ENCODE measurements at regions of chr7 and their contacts with region 1.

Region 1: DNA sequence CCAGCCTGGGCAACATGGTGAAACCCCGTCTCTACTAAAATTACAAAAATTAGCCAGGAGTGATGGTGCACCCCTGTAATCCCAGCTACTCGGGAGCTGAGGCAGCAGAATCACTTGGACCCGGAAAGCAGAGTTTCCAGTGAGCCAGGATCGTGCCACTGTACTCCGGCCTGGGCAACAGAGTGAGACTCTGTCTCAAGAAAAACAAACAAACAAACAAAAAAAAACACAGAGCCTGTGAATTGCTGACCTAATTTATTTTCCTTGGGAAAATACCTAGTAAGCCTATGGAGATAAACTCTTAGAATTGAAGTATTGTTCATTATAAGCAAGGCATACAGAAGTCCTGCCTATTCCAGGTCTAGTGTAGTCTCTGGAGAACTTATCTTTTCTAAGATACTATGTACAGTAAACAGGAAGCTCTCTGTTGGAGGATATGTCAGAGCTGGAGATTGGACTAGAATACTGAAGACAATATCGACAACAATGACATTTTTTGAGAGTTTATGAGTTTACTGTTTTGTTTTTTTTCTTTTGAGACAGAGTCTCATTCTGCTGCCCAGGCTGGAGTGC is 14.9 kb downstream of the GTF2I start:
- DNase-seq: no peak
- H3K4me3 ChIP-seq: no peak overlapping the region
- H3K27me3 ChIP-seq: no peaks in the 10 kb centered on the region
- CTCF ChIP-seq: no peak

Region 2: DNA sequence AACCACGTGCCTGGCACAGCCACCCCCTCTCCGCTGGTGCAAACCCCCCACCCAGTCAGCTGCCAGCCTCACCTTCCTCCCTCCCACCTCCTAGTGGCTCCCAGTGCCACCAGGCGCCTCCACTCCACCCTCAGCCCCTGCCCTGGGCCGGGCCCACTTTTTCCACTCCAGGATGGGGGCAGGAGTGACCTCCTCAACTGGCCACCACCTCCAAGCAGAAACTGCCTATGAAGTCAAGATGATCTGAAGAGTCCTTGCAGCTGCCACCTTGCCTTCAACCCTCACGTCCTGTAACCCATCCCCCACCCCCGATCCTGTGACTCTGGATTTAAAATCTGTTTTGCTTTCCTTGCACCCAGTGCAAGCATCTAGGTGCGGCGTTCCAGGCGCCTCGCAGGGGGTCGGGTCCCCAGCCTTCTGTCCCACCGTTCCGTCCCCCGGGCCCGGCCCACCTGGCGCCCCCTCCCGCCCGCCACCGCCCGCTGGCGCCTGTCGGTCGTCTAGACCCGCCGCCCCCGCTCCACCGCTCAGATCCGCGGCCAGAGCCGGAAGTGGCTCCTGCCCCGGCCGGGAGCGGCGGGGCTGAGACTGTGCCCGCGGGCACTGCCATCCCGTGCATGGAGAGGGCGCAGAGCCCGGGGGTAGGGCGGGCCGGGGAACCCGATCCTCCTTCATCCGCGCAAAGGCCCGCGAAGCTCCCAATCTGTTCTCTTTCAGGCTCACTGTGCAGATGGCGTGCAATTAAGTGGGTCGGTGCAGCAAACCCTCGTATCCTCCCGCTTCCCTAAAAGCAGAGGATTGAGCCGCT is 66.1 kb before region 1 on chr7:
- CTCF ChIA-PET with region 1: no interaction called
- POLR2A ChIA-PET with region 1: interaction called, 17 read pairs
- DNase-seq: no peak
- H3K4me3 ChIP-seq: peak overlapping the region; percentile 28
- H3K27me3 ChIP-seq: no peaks in the 10 kb centered on the region
- CTCF ChIP-seq: no peak